A549 (cell line): ENCODE measurements at regions of chr12 and their contacts with region 1.

Region 1: GRCh38 chr12:12081836-12082497 is 11.2 kb downstream of the BCL2L14 start:
- DNase-seq: peak; percentile 73 to 78
- ATAC-seq: peak; percentile 88 to 90
- H3K4me3 ChIP-seq: no peak overlapping the region
- H3K27ac ChIP-seq: peak overlapping the region; percentile 55 to 85
- H3K4me1 ChIP-seq: peaks cover 14% of the 10 kb centered on the region
- CTCF ChIP-seq: peak; percentile 75
- EP300 ChIP-seq: no peak
- POLR2A ChIP-seq: no peak
- RAD21 ChIP-seq: peak; percentile 88 to 89

Region 2: GRCh38 chr12:11927286-11927935 is 154.6 kb before region 1 on chr12:
- CTCF ChIA-PET with region 1: no interaction called
- POLR2A ChIA-PET with region 1: no interaction called
- DNase-seq: no peak
- ATAC-seq: no peak; a peak in 1 of 6 replicates
- H3K4me3 ChIP-seq: no peak overlapping the region
- H3K27ac ChIP-seq: no peak overlapping the region
- H3K4me1 ChIP-seq: no peaks in the 10 kb centered on the region
- CTCF ChIP-seq: no peak
- EP300 ChIP-seq: no peak
- POLR2A ChIP-seq: no peak
- RAD21 ChIP-seq: no peak

Region 3: GRCh38 chr12:12056951-12057350 is 25.0 kb before region 1 on chr12:
- CTCF ChIA-PET with region 1: no interaction called
- POLR2A ChIA-PET with region 1: no interaction called
- DNase-seq: no peak
- ATAC-seq: no peak
- H3K4me3 ChIP-seq: no peak overlapping the region
- H3K27ac ChIP-seq: no peak overlapping the region
- H3K4me1 ChIP-seq: no peaks in the 10 kb centered on the region
- CTCF ChIP-seq: no peak
- EP300 ChIP-seq: no peak
- POLR2A ChIP-seq: no peak
- RAD21 ChIP-seq: no peak

Region 4: DNA sequence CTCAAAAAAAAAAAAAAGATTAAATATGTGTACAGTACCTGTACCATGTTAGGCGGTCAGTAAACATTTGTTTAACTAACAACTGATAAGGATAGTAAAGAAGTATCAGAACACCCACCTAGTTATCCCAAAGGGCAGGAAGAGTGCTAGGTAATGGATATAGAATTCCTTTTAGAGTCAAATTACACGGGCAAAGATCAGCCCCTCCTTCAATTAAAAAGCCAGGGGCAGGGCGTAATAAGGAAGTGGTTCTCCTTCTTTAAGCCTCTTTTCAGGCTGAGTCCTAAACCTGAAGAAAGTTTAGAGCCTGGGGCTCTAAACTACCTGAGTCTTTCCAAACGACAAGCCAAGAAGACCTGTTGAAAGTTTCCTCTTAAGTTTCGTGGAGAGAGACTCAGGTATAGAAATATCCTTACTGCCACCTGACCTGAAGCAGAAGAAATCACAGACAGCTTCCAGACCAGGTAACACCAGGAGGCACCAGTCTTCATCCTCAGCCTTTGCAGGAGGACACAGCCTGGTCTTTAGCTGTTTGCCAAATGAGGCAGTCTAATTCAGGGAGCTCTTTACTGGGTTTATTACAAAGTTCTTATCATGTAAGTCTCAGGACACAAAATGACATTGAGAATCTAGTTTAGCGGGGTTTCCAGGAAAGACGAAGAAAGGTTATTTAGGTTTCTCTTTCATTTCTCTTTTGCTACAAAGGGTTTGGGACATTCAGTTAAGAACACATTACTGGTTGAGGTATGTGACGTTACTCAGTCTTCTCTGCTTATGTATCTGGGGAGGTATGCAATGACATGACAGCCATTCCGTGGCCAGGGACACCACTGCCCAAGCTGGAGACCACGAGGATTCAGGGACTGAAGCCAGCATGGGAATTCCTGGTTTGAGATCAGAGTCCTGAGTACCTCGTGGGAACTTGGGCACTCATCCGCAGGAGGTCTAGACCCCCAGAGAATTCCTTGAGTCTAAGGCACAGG is 11.0 kb before region 1 on chr12 and contains the start of gene BCL2L14:
- CTCF ChIA-PET with region 1: interaction called, 19 read pairs
- POLR2A ChIA-PET with region 1: no interaction called
- DNase-seq: no peak
- ATAC-seq: peak in 1 of 2 experiments; percentile 52; a peak in 3 of 6 replicates
- H3K4me3 ChIP-seq: no peak within 1 kb of the TSS
- H3K27ac ChIP-seq: no peak within 1 kb of the TSS
- H3K4me1 ChIP-seq: 0 out of 3 replicates have a peak, but pooled peaks cover 4% of the 10 kb centered on the region
- CTCF ChIP-seq: no peak
- EP300 ChIP-seq: no peak
- POLR2A ChIP-seq: no peak
- RAD21 ChIP-seq: no peak
- polyA plus RNA-seq, gene BCL2L14: 0.06 and 0.29 TPM in 2 replicates

Region 5: DNA sequence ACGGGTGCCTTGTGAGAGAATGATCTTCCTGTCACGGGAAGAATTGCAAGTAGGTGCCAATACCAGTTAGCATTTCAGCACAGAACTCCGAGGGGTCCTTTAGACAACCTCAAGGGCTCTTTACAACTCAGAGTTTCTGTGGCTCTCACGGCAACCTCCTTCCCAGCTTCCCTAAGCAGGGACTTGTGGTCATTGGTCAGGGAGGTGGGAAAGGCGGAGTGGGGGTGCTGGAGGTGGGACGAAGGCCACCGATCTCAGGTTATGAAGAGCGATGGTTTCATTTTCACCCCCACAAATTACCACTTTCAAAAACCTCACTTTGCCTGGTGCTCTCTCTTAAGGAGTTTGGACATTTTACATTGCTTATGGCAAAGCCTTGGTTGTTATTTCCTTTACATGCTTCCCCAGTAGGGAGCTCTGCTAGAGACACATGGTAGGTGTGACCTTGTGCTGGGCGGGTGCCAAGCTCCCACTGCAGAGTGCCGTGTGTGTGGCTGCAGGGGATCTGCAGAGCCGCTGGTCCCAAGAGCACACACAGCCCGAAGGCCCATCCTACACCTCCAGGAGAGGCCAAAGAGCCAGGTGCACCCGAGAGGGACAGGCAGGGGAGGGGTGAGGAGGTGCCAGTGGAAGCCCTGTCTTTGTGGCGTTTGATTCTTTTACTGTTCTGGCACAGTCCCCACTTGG is 10.2 kb after region 1 on chr12:
- CTCF ChIA-PET with region 1: interaction called, 20 read pairs
- POLR2A ChIA-PET with region 1: no interaction called
- DNase-seq: no peak
- ATAC-seq: peak; percentile 57 to 59; a peak in 5 of 6 replicates
- H3K4me3 ChIP-seq: no peak overlapping the region
- H3K27ac ChIP-seq: peak overlapping the region in 1 of 2 experiments; percentile 29; a peak in 2 of 6 replicates
- H3K4me1 ChIP-seq: peaks cover 13% of the 10 kb centered on the region
- CTCF ChIP-seq: no peak
- EP300 ChIP-seq: no peak
- POLR2A ChIP-seq: no peak
- RAD21 ChIP-seq: no peak

Region 6: DNA sequence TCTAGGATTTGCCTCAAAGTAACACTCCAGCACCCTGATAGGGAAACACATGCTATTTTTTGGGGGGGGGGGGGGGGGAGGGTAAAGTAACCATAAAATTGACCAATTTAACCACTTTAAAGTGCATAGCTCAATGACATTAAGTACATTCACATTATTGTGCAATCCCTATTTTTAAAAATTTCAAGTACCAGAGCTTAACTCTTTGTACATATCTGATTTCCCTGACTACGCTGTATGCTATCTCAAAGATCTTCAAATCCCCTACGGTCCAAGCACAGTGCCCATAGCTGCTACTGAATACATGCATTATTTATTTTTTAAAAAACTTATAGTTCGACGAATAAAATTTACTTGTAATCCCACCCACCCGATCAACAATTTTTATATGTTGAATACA is 51.8 kb after region 1 on chr12:
- CTCF ChIA-PET with region 1: interaction called, 4 read pairs
- POLR2A ChIA-PET with region 1: interaction called, 15 read pairs
- DNase-seq: no peak
- ATAC-seq: no peak
- H3K4me3 ChIP-seq: no peak overlapping the region
- H3K27ac ChIP-seq: no peak overlapping the region
- H3K4me1 ChIP-seq: peaks cover 16% of the 10 kb centered on the region
- CTCF ChIP-seq: no peak
- EP300 ChIP-seq: no peak
- POLR2A ChIP-seq: no peak
- RAD21 ChIP-seq: no peak

Region 7: GRCh38 chr12:12327802-12328201 is 245.8 kb after region 1 on chr12:
- CTCF ChIA-PET with region 1: interaction called, 214 read pairs
- POLR2A ChIA-PET with region 1: no interaction called
- DNase-seq: peak; percentile 55 to 82
- ATAC-seq: peak; percentile 61 to 68; a peak in 4 of 6 replicates
- H3K4me3 ChIP-seq: no peak overlapping the region
- H3K27ac ChIP-seq: peak overlapping the region; percentile 15 to 63; a peak in 4 of 6 replicates
- H3K4me1 ChIP-seq: peaks cover 5% of the 10 kb centered on the region
- CTCF ChIP-seq: peak; percentile 92
- EP300 ChIP-seq: no peak
- POLR2A ChIP-seq: no peak
- RAD21 ChIP-seq: peak; percentile 90 to 96

Region 8: DNA sequence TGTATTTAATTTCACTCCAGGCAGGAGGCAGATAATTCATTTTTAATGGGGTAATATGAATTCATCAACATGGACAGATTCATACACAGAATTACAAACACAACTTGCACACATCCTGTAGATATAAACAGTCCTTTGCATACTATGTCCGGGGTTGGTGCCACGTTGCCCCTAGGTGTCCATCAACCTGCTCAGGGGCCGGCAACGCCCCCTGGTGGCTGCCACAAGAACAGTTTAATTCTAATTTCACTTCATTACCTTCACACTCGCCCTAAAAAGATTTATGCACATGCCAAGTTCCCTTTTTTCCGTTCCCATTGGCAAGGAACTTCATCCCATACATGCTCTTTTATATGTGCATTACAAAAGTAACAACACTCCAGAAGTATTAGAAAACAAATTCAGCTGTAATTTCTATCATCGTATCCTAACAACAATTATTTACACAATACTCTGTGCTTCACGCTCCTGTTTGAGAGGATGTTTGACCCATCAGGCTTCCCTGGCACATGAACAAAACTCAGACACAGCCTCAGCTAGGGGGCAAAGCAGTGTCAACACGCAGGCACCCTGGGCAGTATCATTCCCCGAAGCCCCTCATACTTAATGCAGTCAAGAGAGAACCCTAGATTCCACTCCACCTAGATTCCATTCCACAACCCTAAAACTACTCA is 252.5 kb after region 1 on chr12:
- CTCF ChIA-PET with region 1: interaction called, 214 read pairs
- POLR2A ChIA-PET with region 1: no interaction called
- DNase-seq: peak; percentile 72 to 77
- ATAC-seq: peak; percentile 93
- H3K4me3 ChIP-seq: no peak overlapping the region
- H3K27ac ChIP-seq: peak overlapping the region in 1 of 2 experiments; percentile 9; a peak in 1 of 6 replicates
- H3K4me1 ChIP-seq: peaks cover 13% of the 10 kb centered on the region
- CTCF ChIP-seq: peak; percentile 96
- EP300 ChIP-seq: no peak
- POLR2A ChIP-seq: no peak
- RAD21 ChIP-seq: peak; percentile 80 to 90

Region 9: GRCh38 chr12:12356886-12357718 is 275.1 kb after region 1 on chr12 and contains the start of gene BORCS5:
- CTCF ChIA-PET with region 1: interaction called, 19 read pairs
- POLR2A ChIA-PET with region 1: no interaction called
- DNase-seq: peak; percentile 87 to 98
- ATAC-seq: peak; percentile 98
- H3K4me3 ChIP-seq: peak within 1 kb of the TSS; percentile 73
- H3K27ac ChIP-seq: peak within 1 kb of the TSS; percentile 88 to 94
- H3K4me1 ChIP-seq: peaks cover 12% of the 10 kb centered on the region
- CTCF ChIP-seq: peak; percentile 43
- EP300 ChIP-seq: no peak
- POLR2A ChIP-seq: peak; percentile 97
- RAD21 ChIP-seq: peak; percentile 35 to 48; a peak in 4 of 5 replicates
- polyA plus RNA-seq, gene BORCS5: 10.2 and 13.7 TPM in 2 replicates